T-cell (primary cell): ENCODE measurements at regions of chr12 and their contacts with region 1.

Region 1: GRCh38 chr12:116708826-116709756 is 28.8 kb downstream of the SPRING1 start:
- DNase-seq: peak in 34 of 35 experiments; percentile 13 to 70 (median 41)
- ATAC-seq: peak; percentile 82 to 90 (median 88)
- H3K4me3 ChIP-seq: no peak overlapping the region
- H3K4me3 Mint-ChIP-seq: peak overlapping the region in 2 of 3 donors; percentile 54 to 60
- H3K27ac ChIP-seq: no peak overlapping the region
- H3K27ac Mint-ChIP-seq: no peak overlapping the region
- H3K4me1 ChIP-seq: peaks cover 0 to 13% of the 10 kb centered on the region in 2 experiments
- H3K4me1 Mint-ChIP-seq: peaks cover 10 to 12% (median 11%) of the 10 kb centered on the region in 3 donors
- H3K27me3 ChIP-seq: peaks cover 0 to 8% of the 10 kb centered on the region in 2 experiments
- H3K27me3 Mint-ChIP-seq: peaks cover 0 to 5% of the 10 kb centered on the region in 2 donors

Region 2: DNA sequence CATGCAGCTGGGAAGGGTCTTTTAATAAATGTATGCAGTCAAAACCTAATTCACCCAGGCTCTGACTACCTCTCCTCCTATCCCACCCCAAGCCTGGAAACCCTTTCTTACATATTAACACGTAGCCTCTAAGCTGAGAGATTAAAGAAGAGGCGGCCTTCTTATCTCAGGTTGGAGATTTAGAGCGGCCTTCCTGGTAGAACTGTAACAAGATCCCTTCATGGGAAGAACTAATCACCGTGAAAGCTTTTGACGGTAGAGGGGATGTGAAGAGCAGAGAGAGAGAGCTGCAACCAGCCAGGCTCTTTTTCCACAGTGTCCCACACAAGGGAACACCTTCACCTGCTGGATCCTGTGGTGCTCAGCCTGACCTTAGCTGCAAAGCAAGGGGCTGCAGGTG is 799.0 kb before region 1 on chr12:
- CTCF ChIA-PET with region 1: no interaction called
- POLR2A ChIA-PET with region 1: no interaction called
- DNase-seq: no peak
- ATAC-seq: no peak
- H3K4me3 ChIP-seq: no peak overlapping the region
- H3K4me3 Mint-ChIP-seq: no peak overlapping the region
- H3K27ac ChIP-seq: no peak overlapping the region
- H3K27ac Mint-ChIP-seq: no peak overlapping the region
- H3K4me1 ChIP-seq: no peaks in the 10 kb centered on the region
- H3K4me1 Mint-ChIP-seq: no peaks in the 10 kb centered on the region
- H3K27me3 ChIP-seq: peaks cover 0 to 6% of the 10 kb centered on the region in 2 experiments
- H3K27me3 Mint-ChIP-seq: peaks cover 26 to 31% of the 10 kb centered on the region in 2 donors

Region 3: DNA sequence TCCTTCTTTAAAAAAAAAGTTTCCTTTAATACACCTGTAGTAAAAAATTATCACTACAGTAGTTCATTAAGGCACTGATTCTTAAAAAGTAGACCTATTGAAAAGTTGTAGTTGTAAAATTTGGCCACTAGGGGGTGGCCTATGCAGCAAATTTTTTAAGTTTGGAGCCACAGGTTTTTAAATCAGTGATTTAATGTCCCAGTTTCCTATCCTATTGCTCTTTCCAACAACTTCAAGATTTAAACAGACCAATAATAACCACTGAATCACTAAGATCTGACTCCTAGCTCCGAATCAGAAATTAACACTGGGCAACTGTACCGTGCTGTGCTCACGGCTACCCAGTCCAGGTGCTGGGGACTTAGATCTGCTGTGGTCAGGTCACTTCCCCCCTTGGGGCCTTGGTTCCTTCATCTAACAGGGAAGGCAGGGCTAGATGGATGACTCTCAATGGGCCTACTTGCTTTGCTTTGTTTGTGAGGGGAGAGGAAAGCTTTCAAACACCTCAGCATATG is 710.9 kb before region 1 on chr12:
- CTCF ChIA-PET with region 1: interaction called, 12 to 16 read pairs
- POLR2A ChIA-PET with region 1: no interaction called
- DNase-seq: peak in 7 of 35 experiments; percentile 5 to 67 (median 11)
- ATAC-seq: peak in 2 of 4 experiments; percentile 31 to 44
- H3K4me3 ChIP-seq: no peak overlapping the region
- H3K4me3 Mint-ChIP-seq: no peak overlapping the region
- H3K27ac ChIP-seq: no peak overlapping the region
- H3K27ac Mint-ChIP-seq: no peak overlapping the region
- H3K4me1 ChIP-seq: peaks cover 0 to 4% of the 10 kb centered on the region in 2 experiments
- H3K4me1 Mint-ChIP-seq: peaks cover 13 to 18% (median 17%) of the 10 kb centered on the region in 3 donors
- H3K27me3 ChIP-seq: no peaks in the 10 kb centered on the region
- H3K27me3 Mint-ChIP-seq: no peaks in the 10 kb centered on the region

Region 4: DNA sequence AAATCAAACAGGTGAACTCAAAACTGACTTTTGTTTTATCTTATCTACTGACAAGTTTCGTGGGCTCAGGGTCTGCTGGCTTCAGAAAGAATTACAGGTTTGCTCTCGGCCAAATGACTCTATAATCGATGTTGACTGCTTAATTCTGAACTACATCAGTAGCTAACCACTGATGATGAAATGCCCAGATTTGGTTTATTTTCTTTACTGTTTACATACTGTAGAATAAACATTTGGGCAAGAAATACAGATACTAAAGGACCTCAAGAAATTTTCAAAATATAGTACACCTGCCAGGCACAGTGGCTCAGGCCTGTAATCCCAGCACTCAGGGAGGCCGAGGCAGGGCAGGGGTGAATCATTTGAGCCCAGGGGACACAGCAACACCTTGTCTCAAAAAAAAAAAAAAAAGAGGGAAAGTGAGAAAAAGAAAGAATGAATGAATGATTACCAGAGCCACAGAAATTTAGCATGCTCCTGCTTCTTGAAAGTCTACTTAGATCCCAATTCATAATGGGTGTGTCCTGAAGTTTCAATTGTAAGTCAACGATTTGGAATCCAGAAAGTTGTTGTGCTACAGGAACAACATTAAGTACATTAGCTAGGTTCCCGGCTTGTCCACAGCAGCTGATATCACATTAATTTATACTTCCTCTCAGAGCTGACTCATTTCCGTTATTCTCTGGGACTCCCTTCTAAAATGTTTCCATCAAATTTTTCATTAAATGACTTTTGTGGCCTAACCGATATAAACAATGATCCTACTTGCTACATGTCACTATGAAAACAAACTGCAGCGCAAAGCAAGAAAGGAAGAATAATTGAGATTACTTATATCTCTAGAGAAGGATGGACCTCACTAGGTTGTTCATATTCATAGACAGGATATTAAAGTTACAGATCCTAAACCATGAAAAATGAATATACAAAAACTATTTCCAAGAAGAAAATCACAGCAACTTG is 565.9 kb before region 1 on chr12:
- CTCF ChIA-PET with region 1: interaction called, 9 to 15 read pairs
- POLR2A ChIA-PET with region 1: no interaction called
- DNase-seq: no peak
- ATAC-seq: peak in 1 of 4 experiments; percentile 38
- H3K4me3 ChIP-seq: no peak overlapping the region
- H3K4me3 Mint-ChIP-seq: peak overlapping the region in 2 of 3 donors; percentile 7 to 15
- H3K27ac ChIP-seq: no peak overlapping the region
- H3K27ac Mint-ChIP-seq: peak overlapping the region; percentile 50 to 55
- H3K4me1 ChIP-seq: peaks cover 11 to 16% of the 10 kb centered on the region in 2 experiments
- H3K4me1 Mint-ChIP-seq: peaks cover 50 to 56% (median 55%) of the 10 kb centered on the region in 3 donors
- H3K27me3 ChIP-seq: no peaks in the 10 kb centered on the region
- H3K27me3 Mint-ChIP-seq: no peaks in the 10 kb centered on the region